CD4-positive, alpha-beta memory T cell (primary cell): ENCODE measurements at regions of chr11 and their contacts with region 1.

Region 1: DNA sequence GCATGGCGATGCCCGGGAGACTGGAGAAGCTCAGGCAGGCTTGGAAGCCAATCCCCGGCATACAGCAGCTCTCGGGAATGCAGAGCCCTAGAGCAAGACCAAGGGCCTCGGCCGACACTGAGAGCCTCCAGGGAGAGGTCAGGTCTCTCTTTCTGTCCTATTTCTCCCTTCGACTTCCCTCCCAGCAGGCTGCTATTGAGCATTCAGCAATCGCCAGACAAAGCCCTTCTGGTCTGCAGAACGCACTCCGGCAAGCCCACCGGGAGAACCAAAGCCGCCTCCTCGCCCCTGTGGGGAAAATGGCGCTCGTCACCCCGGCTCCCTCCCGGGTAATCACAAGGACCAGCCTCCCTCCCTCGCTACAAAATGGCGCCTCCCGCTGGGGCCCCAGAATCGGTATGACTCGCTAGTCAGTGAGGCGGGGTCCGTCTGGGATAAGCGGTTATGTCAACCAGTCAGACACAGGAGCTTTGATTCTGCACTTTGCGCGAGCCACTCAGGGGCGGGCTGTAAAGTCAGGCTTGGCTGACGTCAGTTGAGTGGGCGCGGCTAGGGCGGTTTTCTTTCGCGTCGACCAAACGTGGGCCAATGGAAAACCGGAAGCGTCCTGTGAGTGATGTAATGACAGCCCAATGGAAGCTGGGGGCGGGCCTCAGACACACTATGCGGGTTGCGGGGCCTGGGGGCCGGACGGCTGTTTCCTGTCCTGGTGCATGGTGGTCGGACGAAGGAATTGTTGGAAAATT is at the start of gene ZNF143:
- DNase-seq: peak; percentile 99 to 100 (median 100)
- H3K4me3 ChIP-seq: peak within 1 kb of the TSS; percentile 88 to 96
- H3K4me3 Mint-ChIP-seq: peak within 1 kb of the TSS; percentile 93 to 98 (median 97)
- H3K27ac ChIP-seq: peak within 1 kb of the TSS; percentile 97
- H3K27ac Mint-ChIP-seq: peak within 1 kb of the TSS; percentile 98 to 100 (median 99)
- H3K4me1 ChIP-seq: peaks cover 33% of the 10 kb centered on the region
- H3K4me1 Mint-ChIP-seq: peaks cover 16 to 43% (median 26%) of the 10 kb centered on the region in 4 donors
- H3K27me3 ChIP-seq: no peaks in the 10 kb centered on the region
- H3K27me3 Mint-ChIP-seq: no peaks in the 10 kb centered on the region
- total RNA-seq, gene ZNF143: 50.5 to 51.1 TPM

Region 2: DNA sequence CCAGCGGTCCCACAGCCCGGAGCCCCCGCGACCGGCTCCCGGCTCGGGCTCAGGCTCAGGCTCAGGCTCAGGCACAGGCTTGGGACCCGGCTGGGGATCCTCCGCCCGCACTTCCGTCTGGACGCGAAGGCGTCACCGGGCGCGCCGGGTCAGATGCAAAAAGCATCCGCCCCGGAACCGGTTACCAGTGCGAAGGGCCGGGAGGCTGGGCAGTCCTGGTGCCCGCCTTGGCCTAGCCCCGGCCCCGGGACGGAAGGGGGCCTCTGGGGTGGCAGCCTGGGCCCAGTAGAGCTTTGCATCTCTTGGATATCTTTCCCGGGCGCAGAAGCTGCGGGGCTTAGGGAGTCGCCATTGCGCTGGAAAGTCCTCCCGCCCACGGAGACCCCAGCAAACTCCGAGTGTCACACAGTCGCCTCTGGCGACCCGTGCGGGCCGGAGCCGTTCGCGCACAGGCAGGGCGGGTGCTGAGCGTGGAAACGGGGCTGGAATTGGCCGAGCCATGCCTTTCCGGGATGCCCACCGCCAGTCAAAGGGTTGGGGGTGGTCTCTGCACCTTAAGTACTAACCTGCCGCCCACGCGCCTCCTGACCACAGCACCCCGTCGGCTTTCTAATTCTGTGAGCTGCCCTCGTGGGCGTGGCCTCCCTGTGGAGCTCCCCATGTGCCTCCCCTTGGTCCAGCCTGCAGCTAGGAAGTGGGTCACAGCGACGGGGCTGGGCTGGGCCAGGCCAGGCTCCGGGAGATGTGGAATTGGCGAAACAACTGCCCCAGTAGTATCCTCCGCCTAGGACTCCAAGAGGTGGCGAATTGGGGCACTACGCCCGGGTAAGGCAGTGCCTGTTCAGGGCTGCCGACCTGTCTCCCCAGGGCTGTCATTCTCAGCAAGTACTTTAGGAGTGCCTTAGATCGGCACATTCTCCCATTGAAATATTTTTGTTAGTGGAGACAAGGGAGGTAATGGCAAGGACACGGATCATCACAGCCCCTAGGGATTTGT is 495.9 kb before region 1 on chr11 and contains the start of gene TMEM9B:
- CTCF ChIA-PET with region 1: interaction called, 3 read pairs
- POLR2A ChIA-PET with region 1: interaction called, 23 read pairs
- intact Hi-C with region 1: loop called (anchors 1 kb)
- DNase-seq: peak; percentile 72 to 83 (median 76)
- H3K4me3 ChIP-seq: peak within 1 kb of the TSS; percentile 89 to 91
- H3K4me3 Mint-ChIP-seq: peak within 1 kb of the TSS; percentile 93 to 98 (median 97)
- H3K27ac ChIP-seq: peak within 1 kb of the TSS; percentile 90
- H3K27ac Mint-ChIP-seq: peak within 1 kb of the TSS; percentile 91 to 99 (median 98)
- H3K4me1 ChIP-seq: peaks cover 26% of the 10 kb centered on the region
- H3K4me1 Mint-ChIP-seq: peaks cover 20 to 41% (median 30%) of the 10 kb centered on the region in 4 donors
- H3K27me3 ChIP-seq: no peaks in the 10 kb centered on the region
- H3K27me3 Mint-ChIP-seq: no peaks in the 10 kb centered on the region
- total RNA-seq, gene TMEM9B: 36.8 to 38.9 TPM

Region 3: DNA sequence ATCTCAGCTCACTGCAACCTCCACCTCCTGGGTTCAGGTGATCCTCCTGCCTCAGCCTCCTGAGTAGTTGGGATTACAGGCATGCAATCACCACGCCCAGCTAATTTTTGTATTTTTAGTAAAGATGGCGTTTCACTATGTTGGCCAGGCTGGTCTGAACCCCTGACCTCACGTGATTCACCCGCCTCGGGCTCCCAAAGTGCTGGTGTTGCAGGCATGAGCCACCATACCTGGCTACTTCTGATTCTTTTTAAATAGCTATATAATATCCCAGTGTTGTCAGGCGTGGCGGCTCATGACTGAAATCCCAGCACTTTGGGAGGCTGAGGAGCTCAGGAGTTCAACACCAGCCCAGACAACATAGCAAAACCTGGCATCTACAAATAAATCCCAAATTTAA is 166.8 kb before region 1 on chr11:
- CTCF ChIA-PET with region 1: no interaction called
- POLR2A ChIA-PET with region 1: no interaction called
- intact Hi-C with region 1: no loop called
- DNase-seq: no peak
- H3K4me3 ChIP-seq: no peak overlapping the region
- H3K4me3 Mint-ChIP-seq: no peak overlapping the region
- H3K27ac ChIP-seq: no peak overlapping the region
- H3K27ac Mint-ChIP-seq: peak overlapping the region in 1 of 7 donors; percentile 62
- H3K4me1 ChIP-seq: no peaks in the 10 kb centered on the region
- H3K4me1 Mint-ChIP-seq: no peaks in the 10 kb centered on the region
- H3K27me3 ChIP-seq: no peaks in the 10 kb centered on the region
- H3K27me3 Mint-ChIP-seq: no peaks in the 10 kb centered on the region

Region 4: GRCh38 chr11:9314291-9315036 is 146.0 kb before region 1 on chr11 and contains the start of gene TMEM41B:
- CTCF ChIA-PET with region 1: interaction called, 6 read pairs
- POLR2A ChIA-PET with region 1: interaction called, 70 read pairs
- intact Hi-C with region 1: loop called (anchors 1 kb)
- DNase-seq: peak; percentile 98 to 99 (median 99)
- H3K4me3 ChIP-seq: peak within 1 kb of the TSS; percentile 48 to 82
- H3K4me3 Mint-ChIP-seq: peak within 1 kb of the TSS; percentile 93 to 100 (median 97)
- H3K27ac ChIP-seq: peak within 1 kb of the TSS; percentile 61
- H3K27ac Mint-ChIP-seq: peak within 1 kb of the TSS; percentile 95 to 99 (median 97)
- H3K4me1 ChIP-seq: peaks cover 34% of the 10 kb centered on the region
- H3K4me1 Mint-ChIP-seq: peaks cover 27 to 48% (median 37%) of the 10 kb centered on the region in 4 donors
- H3K27me3 ChIP-seq: no peaks in the 10 kb centered on the region
- H3K27me3 Mint-ChIP-seq: peaks cover 3 to 10% of the 10 kb centered on the region in 2 donors
- total RNA-seq, gene TMEM41B: 53.3 to 54.7 TPM

Region 5: DNA sequence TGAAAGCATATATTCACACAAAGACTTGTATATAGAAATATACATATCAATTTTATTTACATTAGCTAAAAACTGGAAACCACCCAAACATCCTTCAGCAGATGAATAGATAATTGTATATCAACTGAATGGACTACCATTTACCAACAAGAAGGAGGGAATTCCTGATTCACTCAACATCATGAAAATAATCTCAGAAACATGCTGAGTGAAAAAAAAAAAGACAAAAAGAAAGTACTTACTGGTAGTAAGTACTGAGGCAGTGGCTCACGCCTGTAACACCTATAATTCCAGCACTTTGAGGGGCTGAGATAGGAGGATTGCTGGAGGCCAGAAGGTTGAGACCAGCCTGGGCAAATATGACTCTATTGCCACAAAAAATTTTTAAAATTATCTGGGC is 83.5 kb before region 1 on chr11:
- CTCF ChIA-PET with region 1: no interaction called
- POLR2A ChIA-PET with region 1: no interaction called
- intact Hi-C with region 1: no loop called
- DNase-seq: no peak
- H3K4me3 ChIP-seq: no peak overlapping the region
- H3K4me3 Mint-ChIP-seq: no peak overlapping the region
- H3K27ac ChIP-seq: no peak overlapping the region
- H3K27ac Mint-ChIP-seq: no peak overlapping the region
- H3K4me1 ChIP-seq: no peaks in the 10 kb centered on the region
- H3K4me1 Mint-ChIP-seq: peaks cover 0 to 2% (median 0%) of the 10 kb centered on the region in 4 donors
- H3K27me3 ChIP-seq: no peaks in the 10 kb centered on the region
- H3K27me3 Mint-ChIP-seq: peaks cover 0 to 6% of the 10 kb centered on the region in 2 donors

Region 6: DNA sequence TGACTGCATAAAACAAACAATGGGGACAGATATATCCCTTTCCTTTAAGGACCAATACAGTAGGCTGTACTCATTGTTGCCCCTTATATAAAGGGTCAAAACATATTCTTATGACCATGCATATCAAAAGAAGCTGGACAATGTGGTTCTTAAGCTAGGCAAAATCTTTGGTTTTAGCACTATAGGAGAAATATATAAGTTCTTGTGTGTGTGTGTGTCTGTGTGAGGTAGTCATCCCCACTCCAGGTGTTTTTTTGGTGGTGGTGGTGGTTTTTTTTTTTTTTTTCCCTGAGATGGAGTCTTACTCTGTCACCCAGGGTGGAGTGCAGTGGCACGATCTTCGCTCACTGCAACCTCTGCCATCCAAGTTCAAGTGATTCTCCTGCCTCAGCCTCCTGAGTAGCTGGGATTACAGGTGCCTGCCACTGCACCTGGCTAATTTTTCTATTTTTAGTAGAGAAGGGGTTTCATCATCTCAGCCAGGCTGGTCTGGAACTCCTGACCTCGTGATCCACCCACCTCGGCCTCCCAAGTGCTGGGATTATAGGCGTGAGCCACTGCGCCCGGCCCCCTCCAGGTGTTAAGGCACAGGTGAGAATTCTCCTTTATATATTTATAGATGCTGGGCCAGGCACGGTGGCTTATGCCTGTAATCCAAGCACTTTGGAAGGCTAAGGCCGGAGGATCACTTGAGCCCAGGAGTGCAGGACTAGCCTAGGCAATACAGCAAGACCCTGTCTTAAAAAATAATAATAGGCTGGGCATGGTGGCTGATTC is 11.7 kb before region 1 on chr11:
- CTCF ChIA-PET with region 1: interaction called, 3 read pairs
- POLR2A ChIA-PET with region 1: interaction called, 28 read pairs
- intact Hi-C with region 1: no loop called
- DNase-seq: no peak
- H3K4me3 ChIP-seq: no peak overlapping the region
- H3K4me3 Mint-ChIP-seq: no peak overlapping the region
- H3K27ac ChIP-seq: no peak overlapping the region
- H3K27ac Mint-ChIP-seq: no peak overlapping the region
- H3K4me1 ChIP-seq: peaks cover 4% of the 10 kb centered on the region
- H3K4me1 Mint-ChIP-seq: peaks cover 3 to 10% (median 6%) of the 10 kb centered on the region in 4 donors
- H3K27me3 ChIP-seq: no peaks in the 10 kb centered on the region
- H3K27me3 Mint-ChIP-seq: no peaks in the 10 kb centered on the region

Region 7: GRCh38 chr11:9573052-9573774 is 112.7 kb after region 1 on chr11 and contains the start of gene WEE1:
- CTCF ChIA-PET with region 1: no interaction called
- POLR2A ChIA-PET with region 1: interaction called, 67 read pairs
- intact Hi-C with region 1: loop called (anchors 1 kb)
- DNase-seq: peak; percentile 94 to 96 (median 95)
- H3K4me3 ChIP-seq: peak within 1 kb of the TSS; percentile 42 to 80
- H3K4me3 Mint-ChIP-seq: peak within 1 kb of the TSS; percentile 85 to 93 (median 89)
- H3K27ac ChIP-seq: peak within 1 kb of the TSS; percentile 86
- H3K27ac Mint-ChIP-seq: peak within 1 kb of the TSS; percentile 85 to 95 (median 92)
- H3K4me1 ChIP-seq: peaks cover 55% of the 10 kb centered on the region
- H3K4me1 Mint-ChIP-seq: peaks cover 24 to 56% (median 39%) of the 10 kb centered on the region in 4 donors
- H3K27me3 ChIP-seq: no peaks in the 10 kb centered on the region
- H3K27me3 Mint-ChIP-seq: no peaks in the 10 kb centered on the region
- total RNA-seq, gene WEE1: 11.1 to 11.7 TPM

Region 8: GRCh38 chr11:10307442-10308207 is 847.1 kb after region 1 on chr11:
- CTCF ChIA-PET with region 1: no interaction called
- POLR2A ChIA-PET with region 1: interaction called, 3 read pairs
- intact Hi-C with region 1: loop called (anchors 5 kb)
- DNase-seq: peak; percentile 81 to 86 (median 84)
- H3K4me3 ChIP-seq: peak overlapping the region; percentile 54 to 73
- H3K4me3 Mint-ChIP-seq: peak overlapping the region; percentile 69 to 98 (median 78)
- H3K27ac ChIP-seq: peak overlapping the region; percentile 28
- H3K27ac Mint-ChIP-seq: peak overlapping the region in 6 of 7 donors; percentile 7 to 88 (median 59)
- H3K4me1 ChIP-seq: peaks cover 52% of the 10 kb centered on the region
- H3K4me1 Mint-ChIP-seq: peaks cover 22 to 48% (median 35%) of the 10 kb centered on the region in 4 donors
- H3K27me3 ChIP-seq: peaks cover 19% of the 10 kb centered on the region
- H3K27me3 Mint-ChIP-seq: peaks cover 14 to 21% of the 10 kb centered on the region in 2 donors